MCF 10A (cell line): ENCODE measurements at regions of chr5 and their contacts with region 1.

Region 1: GRCh38 chr5:61331407-61332357 is at the start of gene ZSWIM6:
- DNase-seq: peak; percentile 99
- H3K4me3 Mint-ChIP-seq: peak within 1 kb of the TSS; percentile 76
- H3K27ac Mint-ChIP-seq: peak within 1 kb of the TSS; percentile 93
- H3K4me1 Mint-ChIP-seq: peaks cover 45% of the 10 kb centered on the region
- H3K27me3 Mint-ChIP-seq: no peaks in the 10 kb centered on the region
- CTCF ChIP-seq: no peak
- total RNA-seq, gene ZSWIM6: 12.0 and 13.5 TPM in 2 replicates

Region 2: DNA sequence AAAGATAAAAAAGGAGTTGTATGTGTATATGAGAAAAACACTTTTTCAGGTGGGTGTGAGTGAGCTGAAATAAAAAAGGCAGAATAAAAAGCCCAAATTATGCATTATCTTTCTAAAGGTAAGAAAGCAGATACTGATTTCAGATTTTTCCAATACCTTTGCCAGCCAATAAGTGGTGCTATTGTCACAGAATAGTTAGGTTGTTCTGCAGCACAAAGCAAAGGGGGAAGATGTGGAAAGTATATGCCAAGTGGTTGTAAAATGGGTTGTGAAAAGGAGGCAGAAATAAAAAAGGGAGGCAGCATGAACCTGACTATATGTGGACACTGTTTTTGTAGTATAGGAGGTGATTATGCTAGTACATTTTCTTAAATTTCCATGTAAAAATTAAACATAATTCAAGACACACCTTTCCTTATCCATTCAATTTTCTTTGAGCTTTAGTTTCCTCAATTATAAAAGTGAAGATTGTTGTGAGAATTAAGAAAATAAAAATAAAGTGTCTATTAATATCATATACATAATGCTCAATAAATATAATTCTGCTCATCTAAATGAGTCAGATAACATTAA is 276.2 kb before region 1 on chr5:
- CTCF ChIA-PET with region 1: interaction called, 20 read pairs
- POLR2A ChIA-PET with region 1: interaction called, 9 read pairs
- intact Hi-C with region 1: loop called (anchors 1 kb)
- DNase-seq: peak; percentile 51
- H3K4me3 Mint-ChIP-seq: no peak overlapping the region
- H3K27ac Mint-ChIP-seq: no peak overlapping the region
- H3K4me1 Mint-ChIP-seq: peaks cover 33% of the 10 kb centered on the region
- H3K27me3 Mint-ChIP-seq: no peaks in the 10 kb centered on the region
- CTCF ChIP-seq: peak; percentile 60

Region 3: GRCh38 chr5:61301341-61302199 is 30.1 kb before region 1 on chr5:
- CTCF ChIA-PET with region 1: interaction called, 13 read pairs
- POLR2A ChIA-PET with region 1: interaction called, 120 read pairs
- intact Hi-C with region 1: loop called (anchors 1 kb)
- DNase-seq: peak; percentile 98
- H3K4me3 Mint-ChIP-seq: peak overlapping the region; percentile 10
- H3K27ac Mint-ChIP-seq: no peak overlapping the region
- H3K4me1 Mint-ChIP-seq: peaks cover 48% of the 10 kb centered on the region
- H3K27me3 Mint-ChIP-seq: no peaks in the 10 kb centered on the region
- CTCF ChIP-seq: no peak

Region 4: DNA sequence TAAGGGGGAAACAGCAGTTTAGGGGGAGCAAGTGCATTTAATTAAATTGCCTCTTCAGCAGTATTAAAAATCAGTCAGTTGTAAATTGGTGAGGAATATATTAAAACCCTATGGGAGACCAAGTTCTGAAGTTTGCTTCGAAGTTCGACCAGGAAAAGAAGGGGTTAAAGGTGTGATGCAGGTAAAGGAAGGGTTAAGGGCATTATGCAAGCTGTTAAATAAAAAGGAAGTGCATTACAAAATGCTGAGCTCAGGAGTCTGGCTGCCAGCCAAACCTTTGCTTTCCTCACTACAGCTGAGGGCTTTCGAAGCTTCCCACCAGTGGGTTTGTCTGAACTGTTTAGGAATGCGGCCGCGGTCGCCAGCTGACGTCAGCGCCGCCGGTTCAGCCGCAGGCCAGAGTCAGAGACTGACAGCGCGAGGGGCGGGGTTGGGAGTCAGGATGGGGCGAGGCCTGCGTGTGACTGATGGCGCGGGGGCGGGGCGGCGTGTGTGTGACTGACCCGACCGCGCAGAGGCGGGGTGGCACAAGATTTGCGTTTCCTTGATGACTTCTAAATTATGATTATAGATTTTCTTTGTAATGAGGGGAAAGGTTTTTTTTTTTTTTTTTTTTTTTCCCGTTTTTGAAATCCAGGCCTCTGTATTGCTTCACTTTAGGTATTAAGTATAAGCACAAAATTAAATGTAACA is 76.9 kb after region 1 on chr5:
- CTCF ChIA-PET with region 1: interaction called, 3 read pairs
- POLR2A ChIA-PET with region 1: interaction called, 14 read pairs
- intact Hi-C with region 1: loop called (anchors 1 kb)
- DNase-seq: peak; percentile 99
- H3K4me3 Mint-ChIP-seq: peak overlapping the region; percentile 71
- H3K27ac Mint-ChIP-seq: peak overlapping the region; percentile 94
- H3K4me1 Mint-ChIP-seq: peaks cover 29% of the 10 kb centered on the region
- H3K27me3 Mint-ChIP-seq: no peaks in the 10 kb centered on the region
- CTCF ChIP-seq: no peak

Region 5: GRCh38 chr5:61658592-61659008 is 326.9 kb after region 1 on chr5:
- CTCF ChIA-PET with region 1: interaction called, 26 read pairs
- POLR2A ChIA-PET with region 1: interaction called, 5 read pairs
- intact Hi-C with region 1: loop called (anchors 1 kb)
- DNase-seq: peak; percentile 80
- H3K4me3 Mint-ChIP-seq: no peak overlapping the region
- H3K27ac Mint-ChIP-seq: no peak overlapping the region
- H3K4me1 Mint-ChIP-seq: no peaks in the 10 kb centered on the region
- H3K27me3 Mint-ChIP-seq: no peaks in the 10 kb centered on the region
- CTCF ChIP-seq: peak; percentile 94

Region 6: GRCh38 chr5:61732369-61732768 is 400.7 kb after region 1 on chr5:
- CTCF ChIA-PET with region 1: no interaction called
- POLR2A ChIA-PET with region 1: no interaction called
- intact Hi-C with region 1: no loop called
- DNase-seq: no peak
- H3K4me3 Mint-ChIP-seq: no peak overlapping the region
- H3K27ac Mint-ChIP-seq: no peak overlapping the region
- H3K4me1 Mint-ChIP-seq: no peaks in the 10 kb centered on the region
- H3K27me3 Mint-ChIP-seq: peaks cover 43% of the 10 kb centered on the region
- CTCF ChIP-seq: no peak